Mammary epithelial cell (primary cell): ENCODE measurements at regions of chr7 and their contacts with region 1.

Region 1: GRCh38 chr7:70630818-70631457 is 501.0 kb upstream of the GALNT17 start:
- DNase-seq: no peak
- H3K4me3 ChIP-seq: no peak overlapping the region
- H3K27ac ChIP-seq: no peak overlapping the region
- H3K4me1 ChIP-seq: no peaks in the 10 kb centered on the region
- H3K27me3 ChIP-seq: no peaks in the 10 kb centered on the region
- CTCF ChIP-seq: no peak

Region 2: GRCh38 chr7:70553364-70553763 is 77.6 kb before region 1 on chr7:
- CTCF ChIA-PET with region 1: no interaction called
- dilution Hi-C with region 1: loop called (anchors 5 kb)
- in situ Hi-C with region 1: no loop called
- intact Hi-C with region 1: no loop called
- DNase-seq: no peak
- H3K4me3 ChIP-seq: no peak overlapping the region
- H3K27ac ChIP-seq: no peak overlapping the region
- H3K4me1 ChIP-seq: no peaks in the 10 kb centered on the region
- H3K27me3 ChIP-seq: no peaks in the 10 kb centered on the region
- CTCF ChIP-seq: no peak

Region 3: DNA sequence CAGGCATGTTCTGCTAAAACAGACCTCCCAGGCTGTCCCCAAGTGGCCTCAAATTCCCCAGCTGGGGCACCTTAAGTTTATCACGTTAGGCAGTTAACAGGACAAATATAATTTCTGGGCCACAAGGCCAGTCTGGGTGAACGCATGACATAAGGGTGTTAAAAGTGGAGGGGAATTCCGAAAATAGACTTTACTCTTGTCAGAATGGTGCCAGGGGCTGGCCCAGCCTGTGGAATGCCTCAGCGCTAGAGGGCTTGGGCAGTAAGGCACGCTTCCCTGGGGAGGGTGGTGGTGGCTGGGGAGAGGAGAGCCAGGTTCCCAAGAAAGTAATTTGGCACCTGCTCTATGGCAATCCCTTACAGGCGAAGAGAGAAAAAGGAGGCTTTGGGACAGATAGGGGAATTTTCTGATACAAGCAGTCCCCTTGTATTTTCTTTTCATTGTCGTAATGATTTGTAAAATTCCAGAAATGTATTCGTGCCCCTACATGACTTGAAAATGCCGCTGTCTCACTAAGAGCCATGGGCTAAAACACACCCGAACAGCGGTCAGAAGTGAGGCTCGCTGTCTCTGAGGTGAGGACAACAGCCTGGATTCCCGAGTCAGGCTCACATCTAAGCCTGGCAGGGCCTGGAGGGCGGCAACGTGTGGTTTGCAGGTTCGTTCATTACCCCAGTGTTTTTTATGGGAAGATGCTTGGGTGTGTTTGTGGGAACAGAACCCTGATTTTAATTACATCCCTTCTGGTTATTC is 37.8 kb after region 1 on chr7:
- CTCF ChIA-PET with region 1: no interaction called
- dilution Hi-C with region 1: no loop called
- in situ Hi-C with region 1: no loop called
- intact Hi-C with region 1: no loop called
- DNase-seq: peak; percentile 74
- H3K4me3 ChIP-seq: no peak overlapping the region
- H3K27ac ChIP-seq: peak overlapping the region; percentile 15
- H3K4me1 ChIP-seq: peaks cover 13% of the 10 kb centered on the region
- H3K27me3 ChIP-seq: no peaks in the 10 kb centered on the region
- CTCF ChIP-seq: peak in 1 of 2 donors; percentile 15